ENCODE measurements at regions of chr2 and their contacts with region 1.

Region 1: GRCh38 chr2:68745006-68745405 is 10.4 kb downstream of the ARHGAP25 start:
- DNase-seq: no peak
- H3K4me3 ChIP-seq: no peak overlapping the region
- H3K27ac ChIP-seq: no peak overlapping the region
- H3K4me1 ChIP-seq: no peaks in the 10 kb centered on the region
- H3K27me3 ChIP-seq: no peaks in the 10 kb centered on the region; the same call in 1 of the 2 replicates

Region 2: DNA sequence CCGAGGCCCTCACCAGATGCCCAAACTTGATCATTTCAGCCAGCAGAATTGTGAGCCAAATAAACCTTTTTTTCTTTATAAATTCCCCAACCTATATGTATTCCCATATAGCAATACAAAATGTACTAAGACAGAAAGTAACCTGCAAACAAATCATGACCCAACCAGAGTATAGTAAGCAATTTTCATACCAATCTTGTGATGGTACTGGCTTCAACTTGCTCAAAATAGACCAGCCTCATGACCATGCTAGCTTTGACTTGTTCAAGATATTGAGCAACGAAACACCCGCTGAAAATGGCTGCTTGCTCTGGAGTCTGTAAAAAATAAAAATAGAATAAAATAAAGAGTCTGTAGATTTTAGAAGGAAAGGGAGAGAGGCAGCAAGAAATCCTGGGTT is 779.8 kb before region 1 on chr2:
- in situ Hi-C with region 1: no loop called
- DNase-seq: peak; percentile 19
- H3K4me3 ChIP-seq: no peak overlapping the region
- H3K27ac ChIP-seq: no peak overlapping the region
- H3K4me1 ChIP-seq: no peaks in the 10 kb centered on the region
- H3K27me3 ChIP-seq: no peaks in the 10 kb centered on the region

Region 3: GRCh38 chr2:68901199-68901960 is 156.4 kb after region 1 on chr2:
- in situ Hi-C with region 1: loop called (anchors 5 kb)
- DNase-seq: no peak
- H3K4me3 ChIP-seq: no peak overlapping the region
- H3K27ac ChIP-seq: no peak overlapping the region
- H3K4me1 ChIP-seq: no peaks in the 10 kb centered on the region
- H3K27me3 ChIP-seq: peaks cover 11% of the 10 kb centered on the region; the same call in 1 of the 2 replicates